ENCODE measurements at regions of chr1 and their contacts with region 1.

Region 1: DNA sequence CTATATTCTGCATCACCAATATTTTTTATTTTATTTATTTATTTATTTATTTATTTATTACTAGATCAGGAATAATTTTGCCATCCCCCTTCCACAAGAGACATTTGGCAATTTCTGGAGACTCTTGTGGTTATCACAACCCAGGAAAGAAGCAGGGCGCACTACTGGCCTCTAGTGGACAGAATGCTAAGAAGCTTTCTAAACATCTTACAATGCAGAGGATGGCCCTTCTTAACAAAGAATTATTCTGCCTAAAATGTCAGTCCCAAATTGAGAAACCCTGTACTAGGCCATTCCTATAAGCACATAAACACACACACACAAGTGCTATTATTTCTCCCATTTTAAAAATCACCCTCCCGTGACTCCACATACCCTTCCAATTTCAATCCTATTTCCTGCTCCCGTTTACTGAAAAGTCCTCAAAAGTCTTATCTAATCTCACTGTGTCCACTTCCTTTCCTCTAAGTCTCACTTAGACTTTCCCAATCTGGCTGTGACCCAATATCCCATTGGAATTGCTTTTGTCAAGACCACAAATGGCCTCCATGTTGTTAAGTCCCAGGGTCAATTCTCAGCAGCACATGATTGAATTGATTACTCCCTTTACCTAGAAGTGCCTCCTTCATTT is 43.7 kb upstream of the RNF11 start:
- DNase-seq: peak; percentile 80
- ATAC-seq: peak; percentile 93
- H3K4me3 ChIP-seq: no peak overlapping the region
- H3K27ac ChIP-seq: no peak overlapping the region
- H3K4me1 ChIP-seq: no peaks in the 10 kb centered on the region
- H3K27me3 ChIP-seq: no peaks in the 10 kb centered on the region; the same call in 1 of the 2 replicates
- CTCF ChIP-seq: peak; percentile 82
- POLR2A ChIP-seq: no peak
- RAD21 ChIP-seq: peak; percentile 67

Region 2: DNA sequence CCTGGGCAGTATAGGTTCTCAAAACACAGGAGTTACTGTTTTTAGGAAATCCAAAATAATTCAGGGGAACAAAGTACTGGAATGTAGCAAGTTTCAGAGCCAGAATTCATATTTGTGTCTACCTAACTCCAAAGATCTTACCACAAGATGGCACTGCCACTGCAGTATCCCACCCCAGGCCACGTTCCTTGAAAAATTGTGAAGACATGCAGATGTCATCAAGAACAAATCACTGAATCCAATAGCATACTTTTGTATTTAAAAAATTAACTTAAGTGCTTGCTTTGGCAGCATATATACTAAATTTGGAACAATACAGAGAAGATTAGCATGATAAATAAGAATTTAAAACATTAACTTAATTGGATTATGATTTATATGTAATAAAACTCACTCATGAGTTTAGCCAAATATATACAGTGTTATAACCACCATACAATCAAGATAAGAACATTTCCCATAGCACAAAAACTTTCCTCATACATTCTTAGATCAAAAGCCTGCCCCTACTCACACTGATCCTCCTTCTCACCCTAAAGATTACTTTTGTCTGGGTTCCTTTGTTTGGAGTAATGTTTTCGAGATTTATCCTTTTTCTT is 442.2 kb before region 1 on chr1:
- CTCF ChIA-PET with region 1: interaction called, 3 read pairs
- POLR2A ChIA-PET with region 1: no interaction called
- dilution Hi-C with region 1: no loop called
- in situ Hi-C with region 1: no loop called
- intact Hi-C with region 1: loop called (anchors 1 kb)
- DNase-seq: peak; percentile 36
- ATAC-seq: peak; percentile 88
- H3K4me3 ChIP-seq: no peak overlapping the region
- H3K27ac ChIP-seq: no peak overlapping the region
- H3K4me1 ChIP-seq: peaks cover 2% of the 10 kb centered on the region; the same call in 1 of the 2 replicates
- H3K27me3 ChIP-seq: no peaks in the 10 kb centered on the region
- CTCF ChIP-seq: peak; percentile 53
- POLR2A ChIP-seq: no peak
- RAD21 ChIP-seq: peak; percentile 64

Region 3: GRCh38 chr1:50873458-50874187 is 318.7 kb before region 1 on chr1:
- CTCF ChIA-PET with region 1: no interaction called
- POLR2A ChIA-PET with region 1: no interaction called
- dilution Hi-C with region 1: no loop called
- in situ Hi-C with region 1: no loop called
- intact Hi-C with region 1: loop called (anchors 2 kb)
- DNase-seq: peak; percentile 37
- ATAC-seq: peak; percentile 70
- H3K4me3 ChIP-seq: no peak overlapping the region
- H3K27ac ChIP-seq: no peak overlapping the region
- H3K4me1 ChIP-seq: 0 out of 2 replicates have a peak, but pooled peaks cover 1% of the 10 kb centered on the region
- H3K27me3 ChIP-seq: no peaks in the 10 kb centered on the region
- CTCF ChIP-seq: peak; percentile 29
- POLR2A ChIP-seq: no peak
- RAD21 ChIP-seq: no peak; the same call in 1 of the 2 replicates

Region 4: GRCh38 chr1:50968158-50968820 is 224.0 kb before region 1 on chr1:
- CTCF ChIA-PET with region 1: interaction called, 4 read pairs
- POLR2A ChIA-PET with region 1: no interaction called
- dilution Hi-C with region 1: no loop called
- in situ Hi-C with region 1: no loop called
- intact Hi-C with region 1: loop called (anchors 1 kb)
- DNase-seq: peak; percentile 89
- ATAC-seq: peak; percentile 86
- H3K4me3 ChIP-seq: peak overlapping the region; percentile 88
- H3K27ac ChIP-seq: peak overlapping the region; percentile 95
- H3K4me1 ChIP-seq: no peaks in the 10 kb centered on the region
- H3K27me3 ChIP-seq: no peaks in the 10 kb centered on the region
- CTCF ChIP-seq: peak; percentile 42
- POLR2A ChIP-seq: peak; percentile 71
- RAD21 ChIP-seq: no peak

Region 5: GRCh38 chr1:51019811-51020210 is 172.5 kb before region 1 on chr1:
- CTCF ChIA-PET with region 1: no interaction called
- POLR2A ChIA-PET with region 1: no interaction called
- dilution Hi-C with region 1: no loop called
- in situ Hi-C with region 1: no loop called
- intact Hi-C with region 1: no loop called
- DNase-seq: no peak
- ATAC-seq: no peak
- H3K4me3 ChIP-seq: no peak overlapping the region
- H3K27ac ChIP-seq: no peak overlapping the region
- H3K4me1 ChIP-seq: no peaks in the 10 kb centered on the region
- H3K27me3 ChIP-seq: no peaks in the 10 kb centered on the region
- CTCF ChIP-seq: no peak
- POLR2A ChIP-seq: no peak
- RAD21 ChIP-seq: no peak

Region 6: GRCh38 chr1:51235673-51236530 is 43.6 kb after region 1 on chr1 and contains the start of gene RNF11:
- CTCF ChIA-PET with region 1: interaction called, 3 read pairs
- POLR2A ChIA-PET with region 1: interaction called, 4 read pairs
- dilution Hi-C with region 1: no loop called
- in situ Hi-C with region 1: loop called (anchors 5 kb)
- intact Hi-C with region 1: loop called (anchors 2 kb)
- DNase-seq: peak; percentile 86
- ATAC-seq: peak; percentile 96
- H3K4me3 ChIP-seq: peak within 1 kb of the TSS; percentile 85
- H3K27ac ChIP-seq: peak within 1 kb of the TSS; percentile 94
- H3K4me1 ChIP-seq: peaks cover 8% of the 10 kb centered on the region
- H3K27me3 ChIP-seq: no peaks in the 10 kb centered on the region
- CTCF ChIP-seq: no peak
- POLR2A ChIP-seq: peak; percentile 95
- RAD21 ChIP-seq: no peak; the same call in 1 of the 2 replicates
- total RNA-seq, gene RNF11: 63.3 and 119 TPM in 2 replicates

Region 7: DNA sequence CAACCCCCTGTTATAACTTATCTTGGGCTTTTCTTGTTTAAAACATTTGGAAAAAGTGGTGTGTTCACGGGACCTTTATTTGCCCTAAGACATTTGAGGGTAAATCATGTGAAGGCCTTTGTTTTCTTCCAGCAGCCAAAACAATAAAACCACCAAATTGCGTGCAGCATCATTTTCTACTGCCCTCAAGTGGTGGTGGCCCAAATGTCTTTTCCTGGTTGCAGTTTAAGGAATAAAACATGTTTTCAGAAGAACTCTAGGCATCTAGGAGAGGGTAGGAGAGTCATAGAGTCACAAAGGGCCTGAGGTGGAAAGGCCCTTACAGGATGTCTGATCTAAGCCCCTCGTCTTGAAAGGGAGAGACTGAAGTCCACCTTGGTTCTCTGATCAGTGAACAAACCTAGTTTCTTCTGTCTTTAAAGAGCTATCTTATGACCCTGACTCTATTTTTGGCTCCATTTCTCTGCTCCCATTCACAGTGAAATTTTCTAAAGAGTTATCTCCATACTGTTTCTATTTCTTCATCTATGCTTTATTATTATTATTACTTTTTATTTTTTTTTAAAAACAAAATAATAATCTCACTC is 342.8 kb after region 1 on chr1:
- CTCF ChIA-PET with region 1: no interaction called
- POLR2A ChIA-PET with region 1: no interaction called
- dilution Hi-C with region 1: no loop called
- in situ Hi-C with region 1: no loop called
- intact Hi-C with region 1: loop called (anchors 2 kb)
- DNase-seq: peak; percentile 68
- ATAC-seq: peak; percentile 89
- H3K4me3 ChIP-seq: no peak overlapping the region
- H3K27ac ChIP-seq: no peak overlapping the region
- H3K4me1 ChIP-seq: no peaks in the 10 kb centered on the region
- H3K27me3 ChIP-seq: no peaks in the 10 kb centered on the region
- CTCF ChIP-seq: peak; percentile 78
- POLR2A ChIP-seq: no peak
- RAD21 ChIP-seq: peak; percentile 76